Esophagus squamous epithelium (tissue), 5 donors: ENCODE measurements at regions of chr4 and their contacts with region 1.

Region 1: GRCh38 chr4:140052050-140052449 is 101.9 kb downstream of the MAML3 start:
- DNase-seq: no peak
- H3K4me3 ChIP-seq: no peak overlapping the region
- H3K27ac ChIP-seq: no peak overlapping the region
- H3K4me1 ChIP-seq: peaks cover 0 to 34% (median 24%) of the 10 kb centered on the region in 3 donors
- H3K27me3 ChIP-seq: no peaks in the 10 kb centered on the region
- CTCF ChIP-seq: peak in 5 of 6 experiments; percentile 26 to 71 (median 50)
- POLR2A ChIP-seq: no peak

Region 2: DNA sequence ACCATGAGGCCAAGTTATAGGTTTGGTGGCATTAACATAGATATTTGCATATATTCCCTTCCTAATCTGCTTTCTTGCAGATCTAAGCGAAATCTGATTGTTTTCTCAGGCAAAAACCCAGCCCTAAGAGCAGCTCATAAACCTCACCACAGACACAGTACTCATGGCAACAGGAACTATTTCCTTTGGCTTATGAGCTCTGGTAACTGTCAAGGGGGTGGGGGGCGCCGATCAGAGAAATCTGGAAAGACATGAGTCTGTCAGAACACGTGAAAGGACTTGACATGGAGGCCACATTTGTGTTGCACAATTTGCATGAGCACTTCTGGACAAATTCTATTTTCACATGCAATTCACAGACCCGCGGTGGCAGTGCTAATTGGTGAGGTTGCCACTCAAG is 302.7 kb before region 1 on chr4:
- intact Hi-C with region 1: no loop called
- DNase-seq: no peak
- H3K4me3 ChIP-seq: no peak overlapping the region
- H3K27ac ChIP-seq: no peak overlapping the region
- H3K4me1 ChIP-seq: no peaks in the 10 kb centered on the region
- H3K27me3 ChIP-seq: no peaks in the 10 kb centered on the region
- CTCF ChIP-seq: no peak
- POLR2A ChIP-seq: no peak

Region 3: GRCh38 chr4:140252742-140253555 is 200.9 kb after region 1 on chr4:
- intact Hi-C with region 1: loop called (anchors 10 kb)
- DNase-seq: no peak
- H3K4me3 ChIP-seq: peak overlapping the region; percentile 61 to 80 (median 76)
- H3K27ac ChIP-seq: peak overlapping the region; percentile 92 to 96 (median 94)
- H3K4me1 ChIP-seq: peaks cover 7 to 54% (median 9%) of the 10 kb centered on the region in 3 donors
- H3K27me3 ChIP-seq: no peaks in the 10 kb centered on the region
- CTCF ChIP-seq: peak; percentile 88 to 98 (median 92)
- POLR2A ChIP-seq: peak in 1 of 4 donors; percentile 27